Tibial artery (tissue), 4 donors: ENCODE measurements at regions of chr20 and their contacts with region 1.

Region 1: DNA sequence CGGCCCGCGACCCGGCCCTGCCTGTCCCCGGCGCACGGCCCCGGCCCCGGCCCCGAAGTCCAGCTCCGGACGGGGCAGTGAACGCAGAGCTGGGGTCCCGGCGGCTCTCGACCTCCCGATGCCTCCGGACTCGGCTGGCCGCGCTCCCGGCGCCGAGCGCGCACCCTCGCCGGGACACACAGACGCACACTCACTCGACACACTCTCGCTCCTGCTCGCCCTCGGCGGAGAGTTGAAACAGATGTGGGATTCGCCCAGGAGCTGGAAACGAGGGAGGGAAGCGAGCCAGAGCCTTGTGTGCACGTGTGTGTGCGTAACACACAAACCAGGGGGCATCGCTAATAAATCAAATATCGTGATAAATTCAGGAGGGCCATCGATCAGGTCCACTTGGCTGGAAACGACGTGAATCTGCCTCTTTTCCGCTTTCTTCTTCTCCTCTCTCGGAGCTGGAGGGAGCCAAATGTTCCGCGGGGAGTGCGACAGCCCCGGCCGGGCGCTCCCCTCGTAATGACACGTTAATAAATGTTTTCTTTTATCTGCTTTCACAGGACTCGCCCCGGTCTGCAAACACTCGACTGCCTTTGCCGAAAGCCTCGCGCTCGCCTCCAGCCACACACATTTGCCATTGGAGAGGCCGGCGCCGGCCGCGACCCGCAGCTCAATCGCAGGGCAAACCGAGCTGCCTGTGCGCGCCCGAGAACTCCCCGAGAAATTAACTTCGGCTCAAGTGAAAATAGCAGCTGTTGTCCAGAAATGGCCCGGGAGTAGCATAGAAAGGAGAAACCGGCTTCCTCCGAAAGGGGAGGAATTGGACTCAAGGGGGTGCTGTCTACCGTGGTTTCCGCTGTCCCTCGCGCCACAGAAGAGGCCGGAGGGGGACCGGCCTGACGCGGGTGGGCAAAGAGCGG is 828 bp upstream of the SULF2 start:
- DNase-seq: peak; percentile 64 to 85
- H3K4me3 ChIP-seq: peak overlapping the region; percentile 58 to 84
- H3K27ac ChIP-seq: peak overlapping the region; percentile 67 to 75
- H3K4me1 ChIP-seq: peaks cover 7 to 25% (median 14%) of the 10 kb centered on the region in 4 donors
- H3K27me3 ChIP-seq: no peaks in the 10 kb centered on the region
- CTCF ChIP-seq: peak; percentile 68 to 71

Region 2: DNA sequence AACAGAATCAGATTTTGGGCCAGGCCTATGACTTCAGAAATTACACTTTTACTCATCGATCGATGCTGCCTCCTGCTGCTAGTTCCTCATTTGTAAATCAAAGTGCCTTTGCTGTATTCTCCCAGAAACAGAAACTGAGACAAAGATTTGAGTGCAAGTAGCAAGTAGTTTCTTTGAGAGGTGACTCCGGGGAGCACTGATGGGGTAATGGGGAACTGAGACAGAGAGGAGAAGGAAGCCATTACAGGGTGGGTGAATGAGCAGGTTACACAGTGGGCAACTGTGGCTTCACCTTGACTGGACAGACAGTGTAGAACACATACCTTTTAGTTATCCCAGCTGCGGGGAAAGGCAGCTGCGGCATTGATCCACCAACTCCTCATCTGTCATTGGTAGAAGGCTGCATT is 1677.7 kb before region 1 on chr20:
- intact Hi-C with region 1: loop called (anchors 5 kb)
- DNase-seq: no peak
- H3K4me3 ChIP-seq: no peak overlapping the region
- H3K27ac ChIP-seq: no peak overlapping the region
- H3K4me1 ChIP-seq: no peaks in the 10 kb centered on the region
- H3K27me3 ChIP-seq: peaks cover 0 to 30% of the 10 kb centered on the region in 2 donors
- CTCF ChIP-seq: no peak

Region 3: DNA sequence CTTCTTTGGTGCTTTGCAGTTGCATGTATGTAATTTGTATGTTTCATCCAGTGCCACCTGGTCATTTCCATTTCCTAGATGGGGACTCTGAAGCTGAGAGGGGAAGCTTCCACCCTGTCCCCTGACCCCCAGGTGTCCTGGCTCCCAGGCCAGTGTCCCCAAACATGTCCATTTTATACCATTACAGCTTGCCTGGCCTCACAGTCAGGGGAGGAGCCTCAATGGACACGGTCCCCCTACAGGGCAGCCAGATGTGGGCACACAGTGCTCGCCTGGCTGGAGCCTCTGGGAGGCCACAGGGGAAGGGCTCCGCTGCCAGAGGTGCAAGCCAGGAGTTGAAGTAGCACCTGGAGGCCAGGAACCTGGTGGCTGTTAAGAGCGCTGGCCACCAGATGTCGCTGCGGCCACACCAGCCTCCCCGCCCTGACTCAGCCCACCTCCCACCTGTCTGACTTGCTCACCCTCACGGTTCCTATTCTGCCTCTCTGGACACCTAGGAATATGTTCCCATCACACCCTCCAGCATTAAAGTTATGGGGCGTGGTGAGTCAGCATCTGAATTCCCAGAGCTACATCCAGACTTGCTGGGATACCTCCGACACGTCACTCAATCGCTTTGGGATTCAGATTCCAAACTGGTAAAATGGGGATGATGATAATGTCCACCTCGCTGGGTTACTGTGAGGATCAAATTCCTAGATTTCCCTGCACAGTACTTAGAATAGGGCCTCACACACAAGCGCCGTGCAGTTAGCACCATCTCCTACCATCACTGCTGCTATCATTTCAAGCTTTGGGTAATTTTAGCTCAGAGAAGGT is 108.3 kb before region 1 on chr20:
- intact Hi-C with region 1: loop called (anchors 5 kb)
- DNase-seq: no peak
- H3K4me3 ChIP-seq: no peak overlapping the region
- H3K27ac ChIP-seq: no peak overlapping the region
- H3K4me1 ChIP-seq: no peaks in the 10 kb centered on the region
- H3K27me3 ChIP-seq: no peaks in the 10 kb centered on the region
- CTCF ChIP-seq: peak; percentile 68 to 69

Region 4: GRCh38 chr20:48308882-48309281 is 522.8 kb after region 1 on chr20:
- intact Hi-C with region 1: loop called (anchors 10 kb)
- DNase-seq: no peak
- H3K4me3 ChIP-seq: no peak overlapping the region
- H3K27ac ChIP-seq: no peak overlapping the region
- H3K4me1 ChIP-seq: no peaks in the 10 kb centered on the region
- H3K27me3 ChIP-seq: no peaks in the 10 kb centered on the region
- CTCF ChIP-seq: no peak

Region 5: GRCh38 chr20:48619473-48620268 is 833.6 kb after region 1 on chr20:
- intact Hi-C with region 1: loop called (anchors 2 kb)
- DNase-seq: no peak
- H3K4me3 ChIP-seq: no peak overlapping the region
- H3K27ac ChIP-seq: no peak overlapping the region
- H3K4me1 ChIP-seq: peaks cover 0 to 23% (median 18%) of the 10 kb centered on the region in 4 donors
- H3K27me3 ChIP-seq: no peaks in the 10 kb centered on the region
- CTCF ChIP-seq: no peak